Panc1 (cell line): ENCODE measurements at regions of chr12 and their contacts with region 1.

Region 1: DNA sequence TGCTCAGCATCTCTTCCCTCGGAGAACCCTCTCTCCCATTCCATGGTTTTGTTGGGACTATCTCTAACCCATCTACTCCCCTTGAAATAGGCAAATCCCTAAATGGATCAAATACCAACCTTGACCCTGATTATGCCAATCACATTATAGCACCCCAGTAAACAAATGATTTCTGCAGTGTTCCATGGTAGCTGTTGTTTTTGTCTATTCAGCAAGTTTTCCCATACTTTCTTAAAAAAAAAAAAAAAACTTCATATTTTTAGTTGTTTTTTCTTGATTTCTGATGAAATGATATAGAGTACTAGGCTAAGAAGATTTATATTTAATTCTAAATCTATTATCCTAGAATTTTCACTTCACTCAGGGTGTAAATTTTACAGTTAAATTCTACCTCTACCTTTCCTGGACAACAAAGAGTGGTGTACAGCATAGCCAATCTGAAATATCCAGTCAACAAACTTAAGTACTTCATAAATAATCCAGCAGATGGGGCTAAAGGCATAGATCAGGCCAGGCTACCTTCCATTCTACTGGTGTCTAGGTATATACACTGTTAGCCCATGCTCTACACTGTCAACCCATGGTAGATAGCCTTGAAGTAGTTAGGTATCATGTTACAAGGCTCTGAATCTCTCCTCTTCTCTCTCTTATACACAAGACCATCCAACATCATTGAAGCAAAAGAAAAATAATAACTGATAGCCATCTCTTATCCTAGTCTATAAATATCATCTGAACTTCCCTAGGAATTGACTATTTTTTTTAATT is 82.2 kb downstream of the PLEKHG7 start:
- DNase-seq: peak; percentile 53
- ATAC-seq: peak; percentile 99
- H3K4me3 ChIP-seq: no peak overlapping the region
- H3K27ac ChIP-seq: no peak overlapping the region
- H3K4me1 ChIP-seq: no peaks in the 10 kb centered on the region
- H3K27me3 ChIP-seq: no peaks in the 10 kb centered on the region
- CTCF ChIP-seq: peak; percentile 65; the same call in 1 of the 2 replicates

Region 2: DNA sequence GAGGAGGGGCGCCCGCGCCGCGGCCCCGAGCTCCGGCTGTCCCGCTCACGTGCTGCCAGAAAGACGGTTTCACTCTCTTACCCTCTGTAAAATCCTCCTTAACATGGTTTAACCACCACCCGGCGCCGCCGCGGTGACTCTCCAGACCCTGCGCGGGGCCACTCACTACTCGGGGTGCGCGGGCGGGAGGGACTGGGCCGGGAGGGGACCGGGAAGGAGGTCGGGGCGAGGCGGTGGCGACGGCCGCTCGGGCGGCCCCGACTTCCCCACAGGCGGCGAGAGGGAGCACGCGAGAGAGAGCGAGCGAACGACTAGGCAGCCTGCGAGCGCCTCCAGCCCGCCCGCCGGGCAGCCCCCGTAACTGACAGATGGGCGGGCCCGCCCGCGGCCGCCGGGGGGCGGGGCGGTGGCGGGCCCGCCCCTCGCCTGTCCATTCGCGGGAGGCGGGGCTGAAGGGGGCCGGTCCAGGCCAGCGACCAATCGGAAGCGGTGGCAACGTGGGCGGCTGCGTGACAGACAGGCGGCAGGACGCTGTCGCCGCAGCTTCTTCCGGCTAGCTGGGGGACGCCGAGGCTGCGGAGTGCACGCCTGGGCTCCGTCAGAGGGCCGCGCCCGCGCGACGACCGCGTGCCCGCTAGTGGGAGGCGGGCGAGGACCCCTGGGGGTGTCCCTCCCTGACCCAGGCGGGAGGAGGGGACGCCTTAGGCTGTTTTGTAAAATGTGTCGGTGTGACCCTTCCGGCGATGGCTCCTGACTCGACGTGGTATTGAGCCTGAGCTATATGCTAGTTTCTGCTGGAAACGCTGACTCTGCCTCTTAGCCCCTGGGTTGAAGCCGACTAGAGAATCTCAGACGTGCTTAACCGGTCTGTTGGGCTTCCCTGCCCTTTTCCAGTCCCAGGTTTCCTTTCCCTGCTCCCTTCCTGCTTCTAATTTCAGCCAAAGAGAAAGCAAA is 144.3 kb after region 1 on chr12 and contains the start of gene EEA1:
- CTCF ChIA-PET with region 1: no interaction called
- POLR2A ChIA-PET with region 1: no interaction called
- in situ Hi-C with region 1: no loop called
- intact Hi-C with region 1: loop called (anchors 5 kb)
- DNase-seq: peak; percentile 47
- ATAC-seq: peak; percentile 97
- H3K4me3 ChIP-seq: peak within 1 kb of the TSS; percentile 57 to 95
- H3K27ac ChIP-seq: peak within 1 kb of the TSS; percentile 91
- H3K4me1 ChIP-seq: peaks cover 22% of the 10 kb centered on the region
- H3K27me3 ChIP-seq: no peaks in the 10 kb centered on the region
- CTCF ChIP-seq: peak; percentile 29; the same call in 1 of the 2 replicates
- total RNA-seq, gene EEA1: 15.1 TPM

Region 3: DNA sequence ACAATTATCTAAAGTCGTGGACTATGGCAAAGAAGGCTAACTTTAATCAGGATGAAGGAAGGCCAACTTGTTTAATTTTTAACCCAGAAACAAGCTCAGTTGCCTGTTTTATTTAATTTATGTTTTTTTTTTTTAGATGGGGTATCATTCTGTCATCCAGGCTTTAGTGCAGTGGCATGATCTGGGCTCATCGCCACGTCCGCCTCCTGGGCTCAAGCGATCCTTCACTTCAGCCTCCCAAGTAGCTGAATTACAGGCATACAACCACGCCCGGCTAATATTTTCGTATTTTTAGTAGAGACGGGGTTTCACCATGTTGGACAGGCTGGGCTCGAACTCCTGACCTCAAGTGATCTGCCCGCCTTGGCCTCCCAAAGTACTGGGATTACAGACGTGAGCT is 612.4 kb after region 1 on chr12:
- CTCF ChIA-PET with region 1: no interaction called
- POLR2A ChIA-PET with region 1: no interaction called
- in situ Hi-C with region 1: no loop called
- intact Hi-C with region 1: loop called (anchors 5 kb)
- DNase-seq: no peak
- ATAC-seq: no peak
- H3K4me3 ChIP-seq: no peak overlapping the region
- H3K27ac ChIP-seq: no peak overlapping the region
- H3K4me1 ChIP-seq: no peaks in the 10 kb centered on the region
- H3K27me3 ChIP-seq: no peaks in the 10 kb centered on the region
- CTCF ChIP-seq: no peak